H1 (cell line): ENCODE measurements at regions of chr15 and their contacts with region 1.

Region 1: DNA sequence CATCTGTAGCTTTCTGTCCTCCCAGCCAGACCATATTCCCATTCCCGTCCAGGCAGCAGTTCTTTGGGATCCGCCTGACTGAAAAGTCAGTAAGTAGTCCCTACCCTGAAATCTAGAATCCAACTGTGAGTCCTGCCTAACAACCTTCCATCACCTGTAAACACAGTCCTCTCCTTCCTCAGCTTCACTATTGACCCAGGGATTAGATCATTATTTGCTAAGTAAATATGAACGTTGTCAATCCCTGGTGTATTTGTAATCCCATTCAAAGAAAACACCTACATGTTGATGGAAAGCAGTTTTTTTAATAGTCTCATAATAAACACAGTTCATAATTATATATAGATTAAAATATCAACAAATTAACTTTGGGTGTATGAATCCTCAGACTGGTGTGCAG is 732 bp downstream of the SAXO2 start:
- DNase-seq: no peak
- H3K4me3 ChIP-seq: peak overlapping the region; percentile 71 to 86 (median 80)
- H3K27ac ChIP-seq: no peak overlapping the region
- H3K4me1 ChIP-seq: peaks cover 0 to 6% (median 5%) of the 10 kb centered on the region in 4 experiments; a peak in 4 of 7 replicates
- H3K27me3 ChIP-seq: no peaks in the 10 kb centered on the region
- CTCF ChIP-seq: no peak
- EP300 ChIP-seq: no peak
- POLR2A ChIP-seq: no peak
- RAD21 ChIP-seq: no peak

Region 2: GRCh38 chr15:82064824-82065223 is 198.5 kb before region 1 on chr15:
- CTCF ChIA-PET with region 1: no interaction called
- POLR2A ChIA-PET with region 1: no interaction called
- DNase-seq: no peak
- H3K4me3 ChIP-seq: no peak overlapping the region
- H3K27ac ChIP-seq: no peak overlapping the region
- H3K4me1 ChIP-seq: peaks cover 2 to 5% (median 3%) of the 10 kb centered on the region in 4 experiments; a peak in 4 of 7 replicates
- H3K27me3 ChIP-seq: peaks cover 2 to 27% (median 22%) of the 10 kb centered on the region in 4 experiments
- CTCF ChIP-seq: no peak
- EP300 ChIP-seq: no peak
- POLR2A ChIP-seq: no peak
- RAD21 ChIP-seq: no peak

Region 3: DNA sequence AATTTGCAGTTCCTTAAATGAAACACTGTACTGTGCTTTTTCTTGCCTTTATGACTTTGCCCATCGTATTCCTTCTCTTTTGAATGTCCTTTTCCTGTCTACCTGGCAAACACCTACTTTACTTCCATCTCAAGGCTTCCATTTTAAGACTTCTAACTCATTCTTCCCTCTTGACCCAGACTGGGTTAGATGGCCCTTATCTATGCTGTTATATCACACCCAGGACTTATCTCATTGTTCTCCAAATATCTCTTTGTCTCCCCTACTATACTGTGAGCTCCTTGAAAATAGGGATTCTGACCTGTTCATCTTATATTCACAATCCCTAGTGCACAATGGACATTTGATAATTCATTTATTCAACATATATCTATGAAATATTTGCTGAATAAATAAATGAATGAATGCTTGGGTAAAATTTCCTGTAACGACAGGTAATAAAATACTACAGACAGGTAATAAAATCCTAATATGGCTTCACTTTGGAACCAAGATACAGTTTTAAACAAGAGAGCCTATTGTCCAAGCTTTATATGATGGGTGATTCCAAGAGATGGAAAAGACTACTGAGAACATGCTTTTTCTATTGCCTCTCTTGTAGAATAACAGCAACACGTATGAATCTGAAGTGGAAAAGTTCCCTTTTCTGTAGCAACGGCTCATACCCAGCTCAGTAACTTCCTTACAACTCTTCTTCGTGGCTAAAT is 23.5 kb before region 1 on chr15:
- CTCF ChIA-PET with region 1: no interaction called
- POLR2A ChIA-PET with region 1: no interaction called
- DNase-seq: no peak
- H3K4me3 ChIP-seq: no peak overlapping the region
- H3K27ac ChIP-seq: no peak overlapping the region
- H3K4me1 ChIP-seq: no peaks in the 10 kb centered on the region
- H3K27me3 ChIP-seq: no peaks in the 10 kb centered on the region
- CTCF ChIP-seq: no peak
- EP300 ChIP-seq: no peak
- POLR2A ChIP-seq: no peak
- RAD21 ChIP-seq: no peak

Region 4: GRCh38 chr15:82275410-82275809 is 12.1 kb after region 1 on chr15:
- CTCF ChIA-PET with region 1: interaction called, 12 read pairs
- POLR2A ChIA-PET with region 1: interaction called, 3 read pairs
- DNase-seq: no peak
- H3K4me3 ChIP-seq: no peak overlapping the region
- H3K27ac ChIP-seq: no peak overlapping the region
- H3K4me1 ChIP-seq: no peaks in the 10 kb centered on the region
- H3K27me3 ChIP-seq: no peaks in the 10 kb centered on the region
- CTCF ChIP-seq: no peak
- EP300 ChIP-seq: no peak
- POLR2A ChIP-seq: no peak
- RAD21 ChIP-seq: no peak